ENCODE measurements at regions of chr9 and their contacts with region 1.

Region 1: DNA sequence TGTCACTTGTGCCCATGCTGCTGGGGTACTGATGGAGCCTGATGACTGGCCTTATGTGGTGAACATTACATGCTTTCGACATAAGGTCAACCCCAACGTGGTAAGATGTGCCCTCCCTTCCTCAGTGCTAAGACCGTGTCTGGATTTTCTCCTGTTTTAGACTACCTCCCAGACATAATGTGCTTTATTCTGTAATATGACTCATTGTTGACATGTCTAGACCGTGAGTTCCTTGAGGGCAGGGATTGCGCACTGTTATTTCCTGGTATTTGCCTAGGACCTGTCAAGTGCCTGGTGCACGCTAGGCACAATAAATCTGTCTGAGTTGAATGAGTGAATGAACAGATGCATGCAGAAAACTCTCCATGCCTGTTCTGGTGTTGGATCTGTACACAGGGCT is 346.0 kb downstream of the KDM4C start:
- DNase-seq: no peak

Region 2: GRCh38 chr9:5909976-5910375 is 1193.8 kb before region 1 on chr9:
- intact Hi-C with region 1: no loop called
- DNase-seq: no peak

Region 3: DNA sequence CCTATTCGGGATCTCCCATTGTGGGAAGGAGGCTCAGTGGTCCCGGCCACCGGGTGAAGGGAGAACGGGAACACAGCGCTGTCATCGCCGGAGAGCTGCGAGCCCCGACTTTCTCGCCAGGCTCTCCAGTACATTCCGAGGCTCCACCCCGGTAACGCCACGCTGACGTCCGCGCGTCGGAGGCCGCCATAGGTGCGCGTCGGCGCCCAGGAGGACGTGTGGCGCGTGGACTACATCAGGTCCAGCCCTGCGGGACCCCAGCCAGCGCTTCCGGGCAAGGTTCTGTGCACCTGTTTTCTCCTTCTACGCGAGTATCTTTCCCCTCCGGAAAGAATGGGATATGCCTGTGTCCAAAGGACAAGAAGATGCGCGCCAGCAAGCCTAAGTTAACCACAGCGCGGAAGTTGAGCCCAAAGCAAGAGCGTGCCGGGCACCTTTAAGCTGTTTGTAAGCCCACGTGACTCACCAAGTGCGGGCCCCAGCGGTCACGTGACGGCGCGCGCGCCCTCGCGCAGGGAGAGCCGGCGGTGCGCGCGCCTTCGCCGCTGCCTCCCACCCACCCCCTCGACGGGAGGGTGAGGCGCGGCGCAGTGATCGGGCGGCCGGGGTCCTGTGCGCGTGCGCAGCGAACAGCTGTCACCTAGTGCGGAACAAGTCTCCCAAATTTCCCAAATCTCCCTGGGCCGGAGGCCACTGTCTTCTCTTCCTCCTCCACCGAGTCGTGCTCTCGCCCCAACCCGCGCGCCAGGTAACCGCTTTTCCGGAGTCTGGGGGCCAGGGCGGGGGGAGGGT is 346.1 kb before region 1 on chr9 and contains the start of gene KDM4C:
- intact Hi-C with region 1: no loop called
- DNase-seq: peak; percentile 98
- total RNA-seq, gene KDM4C: 31.1 to 36.7 TPM

Region 4: DNA sequence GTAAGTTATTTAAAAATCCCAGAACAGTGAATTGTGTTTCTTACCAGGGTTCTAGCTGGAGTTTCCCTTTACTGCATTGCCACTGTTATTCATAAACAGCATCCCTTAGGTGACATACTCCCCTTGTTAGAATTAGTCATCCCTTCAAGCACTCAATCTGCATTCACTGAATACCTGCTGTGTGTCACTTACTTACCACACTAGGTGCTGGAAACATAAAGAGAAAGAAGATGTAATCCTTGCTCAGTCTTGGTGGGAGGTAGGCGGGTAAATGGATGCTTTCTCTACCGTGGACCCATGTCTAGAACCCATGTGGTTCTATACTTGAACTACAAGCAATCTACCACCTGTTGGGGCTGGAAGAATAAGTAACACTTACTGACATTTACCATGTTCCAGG is 25.6 kb after region 1 on chr9:
- intact Hi-C with region 1: no loop called
- DNase-seq: no peak

Region 5: GRCh38 chr9:7174884-7175283 is 71.1 kb after region 1 on chr9:
- intact Hi-C with region 1: loop called in 1 of 2 experiments (anchors 2 kb)
- DNase-seq: no peak